CD14-positive monocyte (primary cell): ENCODE measurements at regions of chr17 and their contacts with region 1.

Region 1: GRCh38 chr17:81101614-81102306 is 63.5 kb upstream of the PVALEF start:
- DNase-seq: peak; percentile 83 to 89 (median 85)
- H3K4me3 ChIP-seq: no peak overlapping the region
- H3K4me3 Mint-ChIP-seq: no peak overlapping the region
- H3K27ac ChIP-seq: no peak overlapping the region
- H3K27ac Mint-ChIP-seq: no peak overlapping the region
- H3K4me1 ChIP-seq: peaks cover 16 to 21% of the 10 kb centered on the region in 2 donors
- H3K4me1 Mint-ChIP-seq: peaks cover 10% of the 10 kb centered on the region
- H3K27me3 ChIP-seq: no peaks in the 10 kb centered on the region
- H3K27me3 Mint-ChIP-seq: peaks cover under 1 to 5% (median 3%) of the 10 kb centered on the region in 3 donors
- CTCF ChIP-seq: peak; percentile 100

Region 2: DNA sequence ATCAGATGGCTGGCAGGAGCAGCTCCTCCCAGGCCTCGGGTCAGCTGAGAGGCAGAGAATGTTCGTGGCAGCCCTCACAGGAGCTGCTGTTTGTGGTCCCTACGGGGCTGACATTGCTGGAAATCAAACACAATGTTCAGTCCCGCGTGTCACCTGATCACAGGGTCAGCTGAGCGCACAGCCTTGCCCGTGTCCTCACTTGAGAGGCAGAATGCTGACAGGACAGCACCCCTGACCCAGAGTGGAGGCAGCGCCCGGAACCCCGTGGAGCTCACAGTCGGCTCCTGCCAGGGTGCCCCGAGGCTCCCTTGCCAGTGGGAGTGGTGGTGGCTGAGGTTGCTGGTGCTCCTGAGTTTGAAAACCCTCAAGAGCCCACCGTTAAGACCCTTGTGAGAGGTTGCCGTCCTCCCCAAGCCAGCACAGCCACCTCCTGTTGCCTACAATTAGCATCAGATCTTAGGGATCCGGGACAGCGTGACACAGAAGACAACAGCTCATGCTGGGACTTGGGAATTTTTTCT is 113.8 kb before region 1 on chr17:
- intact Hi-C with region 1: loop called in 1 of 2 experiments (anchors 2 kb)
- DNase-seq: no peak
- H3K4me3 ChIP-seq: no peak overlapping the region
- H3K4me3 Mint-ChIP-seq: peak overlapping the region in 1 of 2 donors; percentile 83
- H3K27ac ChIP-seq: no peak overlapping the region
- H3K27ac Mint-ChIP-seq: no peak overlapping the region
- H3K4me1 ChIP-seq: peaks cover 39 to 43% of the 10 kb centered on the region in 2 donors
- H3K4me1 Mint-ChIP-seq: peaks cover 36% of the 10 kb centered on the region
- H3K27me3 ChIP-seq: peaks cover 0 to 6% of the 10 kb centered on the region in 2 donors
- H3K27me3 Mint-ChIP-seq: peaks cover 15 to 26% (median 15%) of the 10 kb centered on the region in 3 donors
- CTCF ChIP-seq: no peak

Region 3: DNA sequence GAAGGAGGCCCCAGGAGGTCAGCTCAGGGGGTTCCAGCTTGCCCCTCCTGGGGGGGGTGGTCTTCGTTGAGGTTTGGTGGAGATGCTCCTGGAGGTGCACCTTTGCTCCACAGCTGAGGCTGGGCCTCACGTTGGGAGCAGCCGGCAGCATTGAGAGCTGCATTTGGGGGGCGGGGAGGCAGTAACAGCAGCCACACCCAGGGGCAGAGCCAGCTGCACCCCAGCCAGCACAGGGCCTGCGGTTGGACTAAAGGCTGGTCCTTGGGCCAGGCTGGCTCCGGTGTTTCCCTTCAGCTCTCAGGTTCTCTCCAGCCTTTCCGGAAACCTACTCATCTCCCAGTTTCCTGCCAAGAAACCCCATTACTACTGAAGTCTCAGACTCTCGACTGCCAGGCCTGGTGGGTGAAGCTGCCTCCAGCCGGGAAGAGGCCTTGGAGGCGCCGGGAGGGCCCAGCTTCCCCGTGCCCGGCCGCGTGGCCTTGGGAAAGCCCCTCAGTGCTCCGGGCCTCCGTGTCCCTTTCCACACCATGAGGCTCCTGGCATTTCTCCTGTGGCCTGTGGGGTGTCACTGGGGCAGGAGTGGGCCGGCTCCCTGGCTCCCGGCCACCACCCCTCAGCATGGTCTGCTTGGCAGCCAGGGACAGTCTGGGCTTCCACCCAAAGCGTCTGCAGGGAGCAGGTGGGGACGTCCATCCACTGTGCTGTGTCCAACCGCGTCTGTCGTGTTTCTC is 80.8 kb before region 1 on chr17:
- intact Hi-C with region 1: loop called (anchors 2 to 5 kb)
- DNase-seq: no peak
- H3K4me3 ChIP-seq: no peak overlapping the region
- H3K4me3 Mint-ChIP-seq: no peak overlapping the region
- H3K27ac ChIP-seq: no peak overlapping the region
- H3K27ac Mint-ChIP-seq: no peak overlapping the region
- H3K4me1 ChIP-seq: peaks cover 19 to 31% of the 10 kb centered on the region in 2 donors
- H3K4me1 Mint-ChIP-seq: peaks cover 29% of the 10 kb centered on the region
- H3K27me3 ChIP-seq: no peaks in the 10 kb centered on the region
- H3K27me3 Mint-ChIP-seq: peaks cover 7 to 24% (median 11%) of the 10 kb centered on the region in 3 donors
- CTCF ChIP-seq: no peak